Activated T-helper 2 cell treated with anti-CD3 and anti-CD28 coated beads, Interferon-gamma antibody, Interleukin-2, Interleukin-4, amounts not matched to agents 10 μg/mL and 5 μg/mL and 100 μg/mL, durations not matched to agents 14 hours and 24 hours and 36 hours (primary cell): ENCODE measurements at regions of chr6 and their contacts with region 1.

Region 1: DNA sequence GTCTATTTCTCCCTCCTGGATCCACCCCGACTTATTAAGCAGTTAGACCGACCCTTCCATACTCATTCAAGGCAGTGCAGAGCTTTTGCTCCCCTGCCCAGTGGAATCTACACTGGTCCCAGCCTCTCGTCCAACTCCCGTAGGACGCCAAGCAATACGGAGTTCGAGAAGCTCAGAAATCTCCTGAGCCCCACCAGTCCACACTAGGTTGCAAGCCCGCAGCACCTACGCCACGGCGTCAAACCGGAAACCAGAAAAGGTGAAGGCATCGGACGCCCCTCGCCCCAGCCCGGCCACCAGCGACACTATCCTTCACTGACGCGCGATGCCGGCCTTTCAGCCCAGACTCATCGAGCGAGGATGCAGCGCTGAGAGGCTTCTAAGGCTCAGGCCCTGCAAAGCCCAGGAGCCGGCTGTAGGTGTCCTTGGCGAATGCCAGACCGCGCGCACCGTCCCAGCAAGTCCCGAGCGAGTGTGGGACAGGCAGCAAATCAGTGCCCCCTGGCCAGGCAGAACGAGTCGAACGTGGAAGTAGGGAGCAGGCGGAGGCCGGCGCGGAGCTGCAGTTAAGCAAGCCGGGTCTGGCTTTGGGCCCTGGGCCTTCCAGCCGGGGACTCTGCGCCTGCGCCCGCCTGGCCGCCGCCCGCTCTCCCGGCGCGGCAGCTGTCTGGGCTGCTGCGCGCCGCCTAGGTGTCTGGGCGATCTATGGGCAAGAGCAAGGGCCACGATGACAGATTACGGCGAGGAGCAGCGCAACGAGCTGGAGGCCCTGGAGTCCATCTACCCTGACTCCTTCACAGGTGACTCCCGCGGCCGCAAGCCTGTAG is at the start of gene RWDD1:
- DNase-seq: peak; percentile 98
- H3K4me3 Mint-ChIP-seq: peak within 1 kb of the TSS; percentile 93
- H3K27ac Mint-ChIP-seq: peak within 1 kb of the TSS; percentile 96
- H3K4me1 Mint-ChIP-seq: peaks cover 31% of the 10 kb centered on the region
- H3K27me3 Mint-ChIP-seq: peaks cover 6% of the 10 kb centered on the region
- total RNA-seq, gene RWDD1: 40.6 and 42.1 TPM in 2 replicates

Region 2: GRCh38 chr6:116100419-116101301 is 470.4 kb before region 1 on chr6 and contains the start of gene NT5DC1:
- intact Hi-C with region 1: loop called (anchors 2 kb)
- DNase-seq: peak; percentile 83
- H3K4me3 Mint-ChIP-seq: peak within 1 kb of the TSS; percentile 89
- H3K27ac Mint-ChIP-seq: peak within 1 kb of the TSS; percentile 89
- H3K4me1 Mint-ChIP-seq: peaks cover 55% of the 10 kb centered on the region
- H3K27me3 Mint-ChIP-seq: no peaks in the 10 kb centered on the region
- total RNA-seq, gene NT5DC1: 44.1 and 50.4 TPM in 2 replicates

Region 3: GRCh38 chr6:116217069-116217468 is 354.0 kb before region 1 on chr6:
- intact Hi-C with region 1: loop called (anchors 5 kb)
- DNase-seq: no peak
- H3K4me3 Mint-ChIP-seq: no peak overlapping the region
- H3K27ac Mint-ChIP-seq: no peak overlapping the region
- H3K4me1 Mint-ChIP-seq: no peaks in the 10 kb centered on the region
- H3K27me3 Mint-ChIP-seq: no peaks in the 10 kb centered on the region

Region 4: GRCh38 chr6:116253505-116254296 is 317.4 kb before region 1 on chr6 and contains the start of gene TSPYL4:
- intact Hi-C with region 1: loop called (anchors 1 kb)
- DNase-seq: peak; percentile 89
- H3K4me3 Mint-ChIP-seq: no peak within 1 kb of the TSS
- H3K27ac Mint-ChIP-seq: no peak within 1 kb of the TSS
- H3K4me1 Mint-ChIP-seq: peaks cover 34% of the 10 kb centered on the region
- H3K27me3 Mint-ChIP-seq: no peaks in the 10 kb centered on the region
- total RNA-seq, gene TSPYL4: 17.5 and 18.0 TPM in 2 replicates

Region 5: DNA sequence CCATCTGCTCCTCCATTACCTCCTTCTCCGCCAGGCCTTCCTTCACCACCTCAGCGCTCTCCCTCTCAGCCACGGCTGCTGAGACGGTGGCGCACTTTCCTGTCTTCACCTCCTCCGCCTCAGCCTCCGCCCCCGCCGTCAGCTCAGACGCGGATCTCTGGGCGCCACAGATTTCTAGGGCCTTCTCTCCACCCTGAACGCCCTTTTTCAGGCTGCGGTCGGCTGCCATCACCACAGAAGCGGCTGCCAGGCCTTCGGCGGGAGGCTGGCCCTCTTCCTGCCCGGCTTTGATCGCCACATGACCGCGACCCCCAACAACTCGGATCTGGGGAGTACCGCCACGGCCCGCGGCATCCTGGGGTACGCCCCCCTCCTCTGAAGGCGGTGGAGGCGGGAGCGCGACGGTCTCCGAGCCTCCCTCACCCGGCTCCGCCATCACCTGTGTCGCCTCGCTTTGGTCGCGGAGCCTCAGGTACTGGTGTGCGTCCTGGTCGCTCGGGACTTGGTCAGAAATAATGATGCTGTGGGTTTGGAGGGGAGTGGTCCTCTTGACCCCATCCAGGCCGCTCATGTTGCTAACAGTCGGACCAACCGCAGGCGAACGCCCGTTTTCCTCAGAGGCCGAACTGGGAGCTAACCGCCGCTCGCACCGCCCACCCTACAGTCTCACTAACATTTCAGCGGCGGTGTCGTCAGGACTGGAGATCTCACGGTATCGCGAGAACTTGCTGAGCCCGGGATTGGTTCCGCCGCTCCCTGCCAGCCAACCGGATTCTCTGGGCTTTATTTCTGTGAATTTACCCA is 291.6 kb before region 1 on chr6 and contains the start of gene TSPYL1:
- intact Hi-C with region 1: loop called (anchors 1 kb)
- DNase-seq: peak; percentile 93
- H3K4me3 Mint-ChIP-seq: peak within 1 kb of the TSS; percentile 97
- H3K27ac Mint-ChIP-seq: peak within 1 kb of the TSS; percentile 97
- H3K4me1 Mint-ChIP-seq: peaks cover 51% of the 10 kb centered on the region
- H3K27me3 Mint-ChIP-seq: peaks cover 3% of the 10 kb centered on the region
- total RNA-seq, gene TSPYL1: 41.1 and 42.3 TPM in 2 replicates

Region 6: DNA sequence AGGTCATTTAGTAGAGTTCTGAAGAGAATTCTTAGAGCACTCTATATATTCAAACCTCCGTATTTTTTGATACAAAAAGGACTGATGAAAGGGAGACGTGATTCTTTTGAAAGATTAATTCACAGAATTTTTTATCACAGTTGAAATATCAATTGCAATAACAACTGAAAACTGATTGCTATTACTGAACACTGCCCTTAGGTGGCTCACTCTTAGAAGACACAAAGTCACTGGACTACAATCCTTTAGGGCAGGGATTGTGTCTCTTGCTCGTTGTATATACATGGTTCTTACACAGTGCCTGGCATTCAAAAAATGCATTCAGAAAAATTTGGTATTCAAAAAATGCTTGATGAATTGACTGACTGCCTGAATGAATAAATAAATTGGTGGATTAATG is 127.0 kb before region 1 on chr6:
- intact Hi-C with region 1: no loop called
- DNase-seq: no peak
- H3K4me3 Mint-ChIP-seq: no peak overlapping the region
- H3K27ac Mint-ChIP-seq: no peak overlapping the region
- H3K4me1 Mint-ChIP-seq: peaks cover 20% of the 10 kb centered on the region
- H3K27me3 Mint-ChIP-seq: peaks cover 31% of the 10 kb centered on the region

Region 7: GRCh38 chr6:116545661-116546060 is 25.4 kb before region 1 on chr6 and contains the start of gene TRAPPC3L:
- intact Hi-C with region 1: no loop called
- DNase-seq: no peak
- H3K4me3 Mint-ChIP-seq: no peak within 1 kb of the TSS
- H3K27ac Mint-ChIP-seq: no peak within 1 kb of the TSS
- H3K4me1 Mint-ChIP-seq: no peaks in the 10 kb centered on the region
- H3K27me3 Mint-ChIP-seq: peaks cover 39% of the 10 kb centered on the region
- total RNA-seq, gene TRAPPC3L: not detected in 2 replicates

Region 8: GRCh38 chr6:116667623-116668022 is 96.6 kb after region 1 on chr6:
- intact Hi-C with region 1: loop called (anchors 1 kb)
- DNase-seq: no peak
- H3K4me3 Mint-ChIP-seq: peak overlapping the region; percentile 99
- H3K27ac Mint-ChIP-seq: peak overlapping the region; percentile 95
- H3K4me1 Mint-ChIP-seq: peaks cover 34% of the 10 kb centered on the region
- H3K27me3 Mint-ChIP-seq: peaks cover 19% of the 10 kb centered on the region

Region 9: DNA sequence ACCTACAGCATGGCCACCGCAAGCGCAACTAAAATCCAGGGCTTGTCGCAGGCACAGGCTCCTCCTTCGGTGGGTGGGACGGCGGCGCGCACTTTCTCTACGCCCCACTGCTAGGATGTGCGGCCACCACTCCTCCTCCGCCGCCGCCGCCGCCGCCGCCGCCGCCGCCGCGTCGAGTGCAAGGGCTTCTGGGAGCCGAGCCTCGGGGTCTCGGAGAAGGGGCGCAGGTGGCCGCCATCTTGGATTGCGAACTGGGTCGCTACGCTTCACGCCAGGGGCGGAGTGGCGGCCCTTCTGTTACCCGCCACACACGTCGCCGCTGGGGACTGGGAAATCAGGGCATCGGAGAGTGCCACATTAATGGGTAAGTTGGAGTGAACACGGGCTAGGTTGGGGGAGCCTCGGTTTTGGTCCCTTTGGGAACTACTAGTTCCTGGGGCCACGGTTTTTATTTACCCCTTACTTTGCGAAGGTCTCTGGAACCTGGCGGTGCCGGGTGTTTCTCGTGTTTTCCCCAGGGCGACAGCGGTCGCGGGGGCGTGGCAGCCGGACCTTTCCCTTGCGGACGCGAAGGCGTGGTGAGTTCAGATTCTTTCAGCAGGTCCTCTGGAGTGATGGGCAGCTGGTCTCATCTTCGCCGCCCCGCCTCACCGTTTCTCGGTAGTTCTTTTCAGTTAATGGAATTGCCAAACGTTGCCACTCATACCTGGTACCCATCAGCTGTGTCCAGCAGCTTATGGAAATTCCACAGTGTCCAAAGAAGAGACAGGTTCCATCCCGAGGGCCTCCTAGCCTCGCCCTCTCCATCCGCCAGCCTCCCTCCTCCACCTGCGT is 110.1 kb after region 1 on chr6 and contains the start of gene KPNA5:
- intact Hi-C with region 1: loop called (anchors 1 kb)
- DNase-seq: peak; percentile 86
- H3K4me3 Mint-ChIP-seq: peak within 1 kb of the TSS; percentile 92
- H3K27ac Mint-ChIP-seq: peak within 1 kb of the TSS; percentile 95
- H3K4me1 Mint-ChIP-seq: peaks cover 21% of the 10 kb centered on the region
- H3K27me3 Mint-ChIP-seq: no peaks in the 10 kb centered on the region
- total RNA-seq, gene KPNA5: 6.3 and 7.4 TPM in 2 replicates